Lower leg skin (tissue), 4 donors: ENCODE measurements at regions of chr11 and their contacts with region 1.

Region 1: GRCh38 chr11:119389611-119390254 is 8.2 kb upstream of the USP2 start:
- DNase-seq: no peak
- H3K4me3 ChIP-seq: no peak overlapping the region
- CTCF ChIP-seq: no peak
- POLR2A ChIP-seq: no peak

Region 2: DNA sequence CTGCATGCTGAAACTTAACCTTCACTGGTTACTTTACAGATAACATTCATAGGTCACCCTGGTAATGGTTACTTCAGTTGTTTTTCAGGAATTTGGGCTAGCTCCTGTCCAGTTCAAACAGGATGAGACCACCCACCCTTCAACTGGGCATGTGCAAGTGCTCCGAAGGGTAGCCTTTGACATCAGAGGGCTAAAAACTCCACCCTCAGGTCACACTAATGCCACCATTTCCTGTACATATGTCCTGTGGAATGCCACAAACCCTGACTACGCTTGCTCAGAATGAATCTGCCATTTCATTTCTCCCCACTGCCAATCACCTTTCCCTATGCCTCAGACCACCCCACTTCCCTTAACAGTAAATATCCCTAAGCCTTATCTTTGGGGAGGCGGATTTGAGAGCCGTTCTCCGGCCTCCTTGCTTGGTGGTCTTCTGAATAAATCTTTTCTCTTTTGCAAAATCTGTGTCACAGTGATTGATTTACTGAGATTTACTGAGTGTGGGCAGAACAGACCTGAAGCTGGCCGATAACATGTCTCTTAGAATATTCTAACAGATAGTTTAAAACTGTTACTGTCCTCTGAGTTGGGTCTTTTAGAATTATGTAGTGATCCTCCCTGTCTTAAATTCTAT is 1539.8 kb before region 1 on chr11:
- intact Hi-C with region 1: loop called (anchors 5 kb)
- DNase-seq: peak in 1 of 2 donors; percentile 6
- H3K4me3 ChIP-seq: no peak overlapping the region
- CTCF ChIP-seq: no peak
- POLR2A ChIP-seq: no peak

Region 3: DNA sequence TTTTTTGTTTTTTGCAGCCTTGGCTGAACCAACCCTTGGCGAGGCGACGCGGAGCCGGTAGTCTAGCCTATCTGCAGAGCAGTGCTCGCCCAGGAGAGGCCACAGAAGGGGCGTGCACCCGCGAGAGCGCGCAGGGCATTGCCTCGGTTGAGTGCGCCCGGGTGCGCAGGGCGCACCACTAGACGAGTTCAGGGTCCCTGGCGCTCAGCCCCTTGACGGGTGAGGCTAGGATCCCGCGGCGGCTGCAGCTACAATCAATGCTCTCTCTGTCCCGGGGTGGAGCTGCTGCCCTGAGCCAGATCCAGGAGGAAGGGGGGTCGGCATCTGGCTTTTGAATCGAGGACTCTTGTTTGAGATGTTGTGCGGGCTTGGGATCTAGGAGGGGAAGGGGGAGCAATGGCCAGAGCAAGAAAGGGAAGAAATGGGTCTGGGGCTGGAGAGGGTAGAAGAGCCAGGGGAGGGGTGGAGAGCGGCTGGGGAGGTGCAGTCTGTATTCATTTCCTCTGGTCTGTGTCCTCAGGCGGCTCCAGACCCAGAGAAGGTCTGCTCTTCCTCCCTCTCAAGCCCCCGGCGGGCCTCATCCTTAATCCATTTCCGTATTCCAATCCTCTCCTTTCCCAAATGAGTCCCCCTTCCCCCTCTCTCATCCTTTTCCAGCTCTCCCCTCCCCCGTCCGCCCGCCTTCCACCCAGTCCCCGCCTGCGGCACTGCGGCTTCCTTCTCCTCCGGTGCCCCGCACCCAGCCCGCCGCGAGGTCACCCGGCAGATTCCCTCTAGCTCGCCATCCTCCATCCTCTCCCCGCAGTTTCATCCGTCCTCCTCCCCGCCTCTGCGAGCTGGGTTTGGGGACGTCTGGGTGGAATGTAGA is 32.4 kb after region 1 on chr11:
- intact Hi-C with region 1: no loop called
- DNase-seq: no peak
- H3K4me3 ChIP-seq: no peak overlapping the region
- CTCF ChIP-seq: no peak
- POLR2A ChIP-seq: no peak

Region 4: DNA sequence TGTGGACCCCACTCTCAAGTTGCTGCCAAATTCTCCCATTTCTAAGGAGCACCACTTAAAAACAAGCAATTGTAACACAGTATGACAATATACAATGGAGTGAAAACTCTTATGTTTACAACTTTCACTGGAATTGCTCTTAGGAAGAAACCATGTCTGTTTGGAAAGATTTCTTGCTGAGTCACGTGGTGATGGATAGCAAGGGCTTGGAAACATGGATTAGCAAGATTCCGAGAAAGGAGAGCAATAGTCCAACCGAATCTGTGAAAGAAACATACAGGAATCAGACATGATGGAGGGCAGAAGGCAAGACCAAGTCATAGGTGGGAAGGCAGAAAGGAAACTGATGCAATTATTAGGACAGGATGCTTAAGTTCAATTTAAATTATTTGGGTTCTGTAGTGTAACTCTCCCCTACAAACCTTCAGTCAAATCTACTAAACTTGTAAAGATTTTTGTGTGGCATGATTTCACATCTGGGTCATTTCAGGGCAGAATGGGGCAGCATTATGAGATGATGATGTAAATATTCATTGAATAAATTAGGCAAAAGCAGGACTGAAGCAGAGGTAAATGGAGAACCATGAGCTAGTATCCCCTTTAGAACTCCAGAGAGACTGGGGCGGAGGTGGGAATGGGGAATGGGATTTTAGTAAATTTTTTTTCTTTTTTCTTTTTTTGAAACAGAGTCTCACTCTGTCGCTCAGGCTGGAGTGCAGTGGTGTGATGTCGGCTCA is 61.0 kb after region 1 on chr11:
- intact Hi-C with region 1: no loop called
- DNase-seq: no peak
- H3K4me3 ChIP-seq: no peak overlapping the region
- CTCF ChIP-seq: no peak
- POLR2A ChIP-seq: no peak